ENCODE measurements at regions of chr17 and their contacts with region 1.

Region 1: GRCh38 chr17:67475236-67475937 is 98.3 kb downstream of the PITPNC1 start:
- DNase-seq: no peak
- H3K4me3 ChIP-seq: no peak overlapping the region
- H3K27me3 ChIP-seq: no peaks in the 10 kb centered on the region
- CTCF ChIP-seq: peak; percentile 88

Region 2: DNA sequence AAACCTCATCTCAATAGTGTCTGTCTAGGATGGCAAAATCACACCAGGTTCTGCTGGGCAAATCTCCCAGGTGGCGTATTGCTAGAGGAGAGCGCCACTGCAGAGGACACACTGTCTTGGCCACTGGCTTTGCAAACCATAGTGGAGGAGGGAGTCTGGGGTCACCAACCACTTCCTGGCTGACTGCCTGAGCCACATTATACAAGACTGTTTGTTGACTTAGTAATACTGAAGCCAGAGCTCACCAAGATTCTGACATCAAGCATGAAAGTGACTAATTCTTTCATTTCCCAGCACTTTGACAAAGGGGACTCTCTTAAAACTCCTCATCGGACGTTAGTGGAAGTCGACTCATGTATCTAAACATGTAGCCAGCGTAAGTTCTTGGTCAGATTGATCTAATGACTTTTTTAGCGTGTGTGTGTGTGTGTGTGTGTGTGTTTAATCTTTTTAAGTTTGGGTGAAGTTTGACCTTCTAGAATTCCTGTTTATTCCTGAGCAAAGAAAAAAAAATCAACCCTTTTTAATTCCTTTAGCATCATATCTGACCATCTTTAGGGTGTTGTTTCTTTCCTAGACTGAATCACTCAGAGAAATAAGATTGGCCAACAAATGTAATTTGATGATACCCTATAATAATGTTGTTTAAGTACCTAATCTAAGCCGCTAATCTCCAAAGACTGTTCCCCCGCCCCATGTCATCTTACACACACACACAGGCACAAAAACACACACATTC is 84.6 kb before region 1 on chr17:
- CTCF ChIA-PET with region 1: interaction called, 21 read pairs
- POLR2A ChIA-PET with region 1: no interaction called
- DNase-seq: peak; percentile 90
- H3K4me3 ChIP-seq: no peak overlapping the region
- H3K27me3 ChIP-seq: no peaks in the 10 kb centered on the region
- CTCF ChIP-seq: no peak

Region 3: GRCh38 chr17:67491009-67491680 is 15.8 kb after region 1 on chr17:
- CTCF ChIA-PET with region 1: interaction called, 11 read pairs
- POLR2A ChIA-PET with region 1: no interaction called
- DNase-seq: peak; percentile 97
- H3K4me3 ChIP-seq: peak overlapping the region; percentile 31
- H3K27me3 ChIP-seq: no peaks in the 10 kb centered on the region
- CTCF ChIP-seq: no peak